Heart left ventricle (tissue), 16 donors: ENCODE measurements at regions of chr18 and their contacts with region 1.

Region 1: DNA sequence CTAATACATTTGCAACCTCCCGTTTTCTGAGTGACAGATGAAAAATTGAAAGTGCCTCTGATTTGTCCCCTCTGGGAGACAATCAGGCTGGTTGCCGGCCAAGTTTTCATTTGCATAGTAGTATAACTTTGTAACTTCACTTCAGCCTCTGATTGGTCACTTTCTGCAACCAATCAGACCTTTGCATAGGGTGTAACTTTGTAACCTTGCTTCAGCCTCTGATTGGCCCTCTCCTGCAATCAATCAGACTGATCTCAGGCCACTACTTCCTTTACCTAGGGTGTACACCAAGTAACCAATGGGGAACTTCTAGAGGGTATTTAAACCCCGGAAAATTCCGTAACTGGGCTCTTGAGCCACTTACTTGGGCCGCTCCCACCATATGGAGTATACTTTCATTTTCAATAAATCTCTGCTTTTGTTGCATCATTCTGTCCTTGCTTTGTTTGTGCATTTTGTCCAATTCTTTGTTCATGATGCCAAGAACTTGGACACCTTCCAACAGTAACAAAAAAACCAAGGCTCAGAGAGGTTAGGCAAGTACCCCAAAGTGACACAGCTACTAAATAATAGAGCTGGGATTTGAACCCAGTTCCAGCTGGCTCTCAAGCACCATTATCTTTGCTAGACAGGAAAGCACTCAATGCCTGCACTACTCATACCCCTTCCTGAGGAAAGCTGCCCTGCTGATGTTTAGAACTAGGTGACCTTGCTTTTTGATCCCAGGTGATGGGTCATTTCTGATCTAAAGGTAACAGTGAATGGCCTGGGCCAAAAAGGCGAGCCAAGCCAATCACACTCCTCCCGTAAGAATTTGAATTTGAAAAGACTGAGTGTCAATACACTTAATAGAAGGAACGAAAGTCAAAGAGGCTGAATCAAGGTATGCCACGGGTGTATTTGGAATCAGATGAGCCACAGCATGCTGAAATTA is 10.9 kb upstream of the MYOM1 start:
- DNase-seq: no peak
- ATAC-seq: no peak
- H3K4me3 ChIP-seq: no peak overlapping the region
- H3K27ac ChIP-seq: no peak overlapping the region
- H3K4me1 ChIP-seq: peaks cover 0 to 10% (median 0%) of the 10 kb centered on the region in 12 donors
- H3K27me3 ChIP-seq: no peaks in the 10 kb centered on the region
- CTCF ChIP-seq: no peak
- POLR2A ChIP-seq: no peak

Region 2: DNA sequence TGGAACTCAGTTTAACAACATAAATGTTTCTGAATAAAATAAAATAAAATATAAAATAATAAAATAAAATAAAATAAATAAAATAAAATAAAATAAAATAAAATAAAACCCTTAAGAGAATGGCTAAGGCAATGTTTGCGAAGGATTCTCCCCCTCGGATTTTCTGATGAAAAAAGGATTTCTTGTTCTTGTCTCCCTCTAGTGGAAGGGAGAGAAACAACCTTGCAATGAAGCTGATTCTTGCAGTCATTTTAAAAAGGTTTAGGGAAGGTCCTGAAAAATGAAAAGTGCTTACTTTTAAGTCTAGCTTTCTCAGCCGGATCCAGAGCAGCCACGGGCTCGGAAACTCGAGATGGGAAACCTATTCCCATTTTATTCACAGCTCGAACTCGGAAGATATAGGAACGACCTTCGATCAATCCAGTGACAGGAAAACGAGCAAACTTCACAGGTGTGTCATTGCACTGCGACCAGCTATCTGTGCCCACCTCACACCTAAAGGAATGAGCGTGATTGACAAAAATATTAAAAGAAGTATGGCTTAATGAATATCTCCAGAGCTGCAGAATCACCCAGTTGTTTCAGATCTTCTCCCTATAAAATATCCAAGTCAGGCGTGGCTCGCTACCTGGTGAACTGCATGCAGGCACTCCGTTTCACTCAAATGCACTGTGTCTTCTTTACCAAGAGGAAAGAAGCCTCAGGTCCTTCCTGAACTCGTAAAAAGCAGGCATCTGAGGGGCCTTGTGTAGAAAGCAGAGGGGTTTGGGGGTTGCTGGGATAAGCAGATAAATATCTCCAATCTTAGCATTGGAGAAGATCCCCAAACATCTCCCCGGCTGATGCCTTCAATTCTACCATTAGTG is 79.0 kb before region 1 on chr18:
- intact Hi-C with region 1: loop called in 1 of 10 experiments (anchors 10 kb)
- DNase-seq: no peak
- ATAC-seq: no peak
- H3K4me3 ChIP-seq: no peak overlapping the region
- H3K27ac ChIP-seq: peak overlapping the region in 1 of 12 donors; percentile 0
- H3K4me1 ChIP-seq: peaks cover 3 to 39% (median 20%) of the 10 kb centered on the region in 12 donors
- H3K27me3 ChIP-seq: no peaks in the 10 kb centered on the region
- CTCF ChIP-seq: peak; percentile 64 to 86 (median 72)
- POLR2A ChIP-seq: no peak

Region 3: GRCh38 chr18:3177902-3178687 is 52.6 kb before region 1 on chr18:
- intact Hi-C with region 1: loop called in 2 of 10 experiments (anchors 10 kb)
- DNase-seq: peak in 4 of 5 donors; percentile 52 to 68 (median 62)
- ATAC-seq: peak; percentile 39 to 71 (median 52)
- H3K4me3 ChIP-seq: no peak overlapping the region
- H3K27ac ChIP-seq: peak overlapping the region in 11 of 12 donors; percentile 10 to 87 (median 45)
- H3K4me1 ChIP-seq: peaks cover 0 to 37% (median 14%) of the 10 kb centered on the region in 12 donors
- H3K27me3 ChIP-seq: no peaks in the 10 kb centered on the region
- CTCF ChIP-seq: no peak
- POLR2A ChIP-seq: no peak